ENCODE measurements at regions of chr7 and their contacts with region 1.

Region 1: DNA sequence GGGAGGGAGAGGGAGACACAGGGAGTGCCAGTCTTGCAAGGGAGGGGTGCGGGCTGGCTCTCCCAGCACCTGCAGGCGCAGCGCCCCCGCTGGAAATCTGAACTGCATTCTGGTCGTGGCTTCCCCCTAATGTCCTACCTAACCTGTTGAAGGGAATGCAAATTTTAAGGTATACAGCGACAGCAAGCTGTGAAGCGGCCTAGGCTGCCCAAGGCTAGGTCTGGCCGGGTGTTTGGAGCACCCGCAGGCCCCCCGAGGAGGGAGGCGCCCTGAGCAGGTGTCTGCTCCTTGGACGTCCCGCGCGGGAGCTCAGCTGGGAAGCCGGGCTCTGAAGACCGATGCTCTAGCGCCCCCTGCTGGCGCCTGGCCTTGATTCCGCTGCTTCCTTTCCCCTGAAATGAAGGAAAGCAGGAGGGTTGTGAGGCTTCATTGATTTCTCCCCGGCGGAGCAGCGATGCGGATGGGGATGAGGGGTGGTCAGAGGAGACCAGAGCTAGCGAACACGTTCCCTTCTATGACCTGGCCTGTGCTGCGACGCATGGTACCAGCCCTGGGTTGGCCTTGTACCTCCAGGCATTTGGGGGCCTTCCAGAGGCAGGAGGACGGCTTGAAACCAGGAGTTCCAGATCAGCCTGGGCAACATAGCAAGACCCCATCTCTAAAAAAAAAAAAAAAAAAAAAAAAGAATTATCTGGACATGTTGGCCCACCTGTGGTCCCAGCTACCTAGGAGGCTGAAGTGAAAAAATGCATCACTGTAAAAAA is 601.3 kb downstream of the GALNT17 start:
- DNase-seq: peak; percentile 29 to 41 (median 37)
- H3K4me3 ChIP-seq: no peak overlapping the region
- H3K4me3 Mint-ChIP-seq: no peak overlapping the region
- H3K27ac ChIP-seq: no peak overlapping the region
- H3K27ac Mint-ChIP-seq: no peak overlapping the region
- H3K4me1 ChIP-seq: no peaks in the 10 kb centered on the region
- H3K4me1 Mint-ChIP-seq: no peaks in the 10 kb centered on the region
- H3K27me3 ChIP-seq: no peaks in the 10 kb centered on the region
- H3K27me3 Mint-ChIP-seq: peaks cover 2 to 10% (median 8%) of the 10 kb centered on the region in 3 donors
- CTCF ChIP-seq: peak; percentile 91

Region 2: GRCh38 chr7:70856866-70857630 is 876.2 kb before region 1 on chr7:
- intact Hi-C with region 1: loop called in 1 of 2 experiments (anchors 10 kb)
- DNase-seq: peak; percentile 2 to 17 (median 11)
- H3K4me3 ChIP-seq: no peak overlapping the region
- H3K4me3 Mint-ChIP-seq: no peak overlapping the region
- H3K27ac ChIP-seq: no peak overlapping the region
- H3K27ac Mint-ChIP-seq: no peak overlapping the region
- H3K4me1 ChIP-seq: no peaks in the 10 kb centered on the region
- H3K4me1 Mint-ChIP-seq: no peaks in the 10 kb centered on the region
- H3K27me3 ChIP-seq: no peaks in the 10 kb centered on the region
- H3K27me3 Mint-ChIP-seq: peaks cover 0 to 2% (median 0%) of the 10 kb centered on the region in 3 donors
- CTCF ChIP-seq: peak; percentile 97